Aorta (tissue), 5 donors: ENCODE measurements at regions of chr7 and their contacts with region 1.

Region 1: DNA sequence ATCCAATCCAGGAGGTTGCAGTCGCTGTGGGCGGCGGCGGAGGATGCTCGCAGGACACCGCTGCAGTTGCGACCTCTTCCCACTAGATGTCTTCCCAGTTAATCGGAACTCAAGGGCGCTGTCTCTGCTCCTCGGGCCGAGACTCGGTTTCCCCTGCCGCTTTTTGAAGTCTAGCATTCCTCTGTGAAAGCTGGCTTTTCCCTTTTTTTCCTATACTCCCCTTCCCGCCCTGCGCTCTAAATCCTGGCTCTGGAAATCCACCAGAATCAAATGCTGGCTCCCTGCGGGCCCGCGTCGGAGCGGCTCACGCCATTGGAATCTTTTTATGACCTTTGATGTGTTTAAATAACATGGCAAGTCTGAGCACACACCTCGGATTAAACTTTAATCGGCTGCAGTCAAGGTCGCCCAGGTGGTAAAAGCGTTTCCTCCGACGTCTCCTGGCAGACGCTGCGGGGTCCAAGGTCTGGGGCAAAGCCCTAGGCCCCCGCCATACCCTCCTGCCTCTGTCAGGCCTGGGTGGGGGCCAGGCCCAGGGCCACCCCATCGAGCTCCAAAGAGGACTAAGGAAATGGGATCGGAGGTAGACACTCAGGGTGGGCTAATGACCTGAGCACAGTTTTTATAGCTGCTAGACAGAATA is 10.7 kb upstream of the HOXA13 start:
- DNase-seq: peak; percentile 55 to 85
- ATAC-seq: peak; percentile 76
- H3K4me3 ChIP-seq: no peak overlapping the region
- H3K27ac ChIP-seq: no peak overlapping the region
- H3K4me1 ChIP-seq: no peaks in the 10 kb centered on the region
- H3K27me3 ChIP-seq: no peaks in the 10 kb centered on the region

Region 2: GRCh38 chr7:27576360-27576944 is 365.9 kb after region 1 on chr7:
- intact Hi-C with region 1: loop called (anchors 5 to 10 kb)
- DNase-seq: no peak
- ATAC-seq: no peak
- H3K4me3 ChIP-seq: no peak overlapping the region
- H3K27ac ChIP-seq: no peak overlapping the region
- H3K4me1 ChIP-seq: no peaks in the 10 kb centered on the region
- H3K27me3 ChIP-seq: no peaks in the 10 kb centered on the region